BJ (cell line): ENCODE measurements at regions of chr22 and their contacts with region 1.

Region 1: GRCh38 chr22:28051787-28052356 is 132.8 kb upstream of the PITPNB start:
- DNase-seq: no peak
- H3K4me3 ChIP-seq: no peak overlapping the region
- H3K27me3 ChIP-seq: no peaks in the 10 kb centered on the region
- CTCF ChIP-seq: peak; percentile 93

Region 2: DNA sequence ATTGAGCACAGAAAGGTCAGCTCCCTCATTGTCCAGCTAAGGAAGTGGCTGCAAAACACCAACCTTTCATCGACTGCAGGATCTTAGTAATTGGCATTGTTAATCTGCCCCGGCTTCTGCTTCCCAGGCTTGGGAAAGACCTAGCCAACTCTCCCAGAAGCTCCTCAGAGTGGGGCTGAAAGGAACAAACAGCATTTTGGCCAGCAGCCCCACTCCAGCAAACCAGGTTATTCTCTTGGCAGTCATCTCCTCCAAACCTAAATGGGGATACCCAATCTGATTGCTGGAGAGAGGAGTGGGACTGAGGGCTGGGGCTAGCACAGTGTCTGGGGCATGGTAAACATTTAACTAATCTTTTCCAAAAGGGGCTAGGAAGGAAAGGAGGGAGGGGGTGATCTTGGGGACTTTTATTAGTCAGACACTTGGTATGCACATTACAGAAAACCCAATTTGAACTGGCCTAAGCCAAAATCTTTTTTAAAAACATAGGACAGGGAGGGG is 544.7 kb before region 1 on chr22:
- CTCF ChIA-PET with region 1: no interaction called
- POLR2A ChIA-PET with region 1: no interaction called
- DNase-seq: no peak
- H3K4me3 ChIP-seq: no peak overlapping the region
- H3K27me3 ChIP-seq: no peaks in the 10 kb centered on the region
- CTCF ChIP-seq: no peak

Region 3: DNA sequence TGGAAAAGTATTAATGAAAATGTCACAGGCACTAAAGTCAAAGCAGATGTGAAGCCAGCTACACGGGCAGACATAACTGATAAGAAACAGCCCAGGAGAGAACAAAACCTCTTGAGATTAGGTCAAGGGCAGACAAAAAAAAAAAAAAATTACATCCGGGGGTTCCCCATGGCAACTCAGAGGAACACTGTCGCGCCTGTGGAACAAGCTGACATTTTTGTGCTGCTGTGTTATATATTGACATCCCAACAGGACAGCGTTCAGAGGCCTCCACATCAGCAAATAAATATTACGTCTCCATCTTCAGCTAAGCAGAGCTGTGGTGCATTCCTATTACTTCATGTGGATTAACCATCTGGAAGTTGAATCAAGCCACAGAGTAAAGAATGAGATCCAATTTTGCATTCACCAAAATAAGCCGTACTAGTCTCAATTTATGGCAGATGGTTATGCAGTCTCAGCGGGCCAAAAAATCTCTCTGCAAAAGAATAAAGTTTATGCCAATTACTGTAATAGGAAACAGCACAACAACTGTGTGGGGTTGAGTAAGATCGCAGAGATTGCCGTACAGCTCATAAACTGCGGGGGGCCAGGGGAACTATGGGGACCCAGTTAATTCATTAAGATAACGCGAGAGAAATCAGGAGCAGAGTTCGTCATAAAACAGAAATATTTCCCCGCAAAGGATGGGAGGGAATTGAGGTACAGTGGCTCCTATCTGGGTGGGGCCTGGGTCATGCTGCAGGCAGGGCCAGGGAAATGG is 209.0 kb before region 1 on chr22:
- CTCF ChIA-PET with region 1: no interaction called
- POLR2A ChIA-PET with region 1: no interaction called
- DNase-seq: peak; percentile 31
- H3K4me3 ChIP-seq: no peak overlapping the region
- H3K27me3 ChIP-seq: no peaks in the 10 kb centered on the region
- CTCF ChIP-seq: no peak

Region 4: DNA sequence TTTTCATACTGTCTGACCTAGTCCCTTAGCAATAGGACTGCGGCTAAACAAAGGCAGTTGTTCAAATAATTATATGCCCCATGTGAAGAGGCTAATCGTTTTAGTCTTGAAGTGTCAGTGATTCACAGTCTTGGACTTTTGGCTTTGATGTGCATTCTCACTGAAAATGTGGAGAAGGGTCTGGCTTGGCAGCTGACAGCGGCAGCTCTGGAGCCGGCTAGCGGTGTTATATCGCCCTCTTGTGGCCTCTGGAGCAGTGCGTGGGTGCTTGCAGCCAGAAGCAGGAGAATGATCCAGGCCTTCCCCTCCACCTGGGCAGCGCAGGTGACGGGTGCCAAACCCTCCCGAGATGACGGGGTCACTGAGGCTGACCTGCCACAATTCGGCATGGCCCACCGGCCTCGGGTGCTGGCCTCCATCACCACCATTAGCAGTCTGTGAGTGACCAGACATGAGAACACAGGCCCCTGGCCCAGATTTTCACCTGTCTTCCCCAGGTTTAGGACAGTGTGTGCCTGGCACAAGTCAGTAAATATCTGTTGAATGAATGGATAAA is 42.5 kb before region 1 on chr22:
- CTCF ChIA-PET with region 1: no interaction called
- POLR2A ChIA-PET with region 1: no interaction called
- DNase-seq: peak; percentile 35
- H3K4me3 ChIP-seq: no peak overlapping the region
- H3K27me3 ChIP-seq: no peaks in the 10 kb centered on the region
- CTCF ChIP-seq: peak; percentile 96

Region 5: DNA sequence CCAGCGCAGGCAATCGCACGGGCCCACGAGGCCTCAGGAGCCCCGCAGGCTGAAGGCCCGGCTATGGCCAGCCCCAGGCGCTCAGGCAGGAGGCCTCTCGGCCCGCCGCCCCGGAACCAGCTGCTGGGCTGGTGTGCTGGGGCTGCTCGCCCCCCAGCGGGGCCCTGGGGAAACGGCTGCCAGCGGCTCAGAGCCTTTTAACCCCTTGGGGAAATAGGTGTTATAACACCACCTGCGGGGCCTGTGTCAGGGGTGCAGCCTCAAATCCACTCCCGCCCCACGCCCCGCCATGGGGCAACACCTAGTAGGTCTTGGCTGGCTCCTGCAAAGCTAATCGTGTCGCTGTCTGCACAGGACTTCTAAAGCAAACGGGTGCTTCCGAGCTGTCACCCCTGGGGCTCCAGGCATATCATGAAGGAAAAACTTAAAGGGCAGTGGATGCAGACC is 390.4 kb after region 1 on chr22:
- CTCF ChIA-PET with region 1: interaction called, 33 read pairs
- POLR2A ChIA-PET with region 1: no interaction called
- DNase-seq: no peak
- H3K4me3 ChIP-seq: peak overlapping the region; percentile 52
- H3K27me3 ChIP-seq: no peaks in the 10 kb centered on the region; the same call in 1 of the 2 replicates
- CTCF ChIP-seq: peak; percentile 82

Region 6: DNA sequence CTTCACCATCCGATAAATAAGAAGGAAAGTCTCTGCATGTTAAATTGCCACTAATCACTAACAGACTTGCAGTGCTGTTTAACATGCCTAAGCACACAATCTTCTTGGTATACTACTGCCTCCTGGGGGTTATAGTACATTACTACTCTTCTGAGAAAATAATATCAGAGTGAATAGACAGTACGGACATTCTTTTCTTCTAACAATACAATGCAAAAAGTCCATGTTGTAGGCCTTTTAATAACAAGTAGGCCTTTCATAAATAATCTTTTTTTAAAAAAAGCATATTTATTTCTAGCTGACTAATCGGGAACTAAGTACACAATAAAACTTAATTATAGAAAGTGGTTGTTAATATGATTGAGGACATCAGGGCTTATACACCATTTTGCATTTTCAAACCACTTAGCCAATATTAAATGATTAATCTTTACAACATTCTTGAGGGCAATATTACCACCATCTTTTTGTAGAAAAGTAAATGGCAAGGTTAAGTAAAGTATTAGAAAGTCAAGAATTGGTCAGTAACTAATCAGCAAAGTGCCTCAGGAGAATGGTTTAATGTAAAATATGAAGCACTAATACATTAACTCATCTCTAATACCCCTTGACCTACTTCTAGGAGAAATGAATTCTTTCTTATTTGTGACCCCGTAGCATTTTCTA is 543.1 kb after region 1 on chr22:
- CTCF ChIA-PET with region 1: interaction called, 19 read pairs
- POLR2A ChIA-PET with region 1: no interaction called
- DNase-seq: peak; percentile 18
- H3K4me3 ChIP-seq: no peak overlapping the region
- H3K27me3 ChIP-seq: no peaks in the 10 kb centered on the region
- CTCF ChIP-seq: peak; percentile 69

Region 7: DNA sequence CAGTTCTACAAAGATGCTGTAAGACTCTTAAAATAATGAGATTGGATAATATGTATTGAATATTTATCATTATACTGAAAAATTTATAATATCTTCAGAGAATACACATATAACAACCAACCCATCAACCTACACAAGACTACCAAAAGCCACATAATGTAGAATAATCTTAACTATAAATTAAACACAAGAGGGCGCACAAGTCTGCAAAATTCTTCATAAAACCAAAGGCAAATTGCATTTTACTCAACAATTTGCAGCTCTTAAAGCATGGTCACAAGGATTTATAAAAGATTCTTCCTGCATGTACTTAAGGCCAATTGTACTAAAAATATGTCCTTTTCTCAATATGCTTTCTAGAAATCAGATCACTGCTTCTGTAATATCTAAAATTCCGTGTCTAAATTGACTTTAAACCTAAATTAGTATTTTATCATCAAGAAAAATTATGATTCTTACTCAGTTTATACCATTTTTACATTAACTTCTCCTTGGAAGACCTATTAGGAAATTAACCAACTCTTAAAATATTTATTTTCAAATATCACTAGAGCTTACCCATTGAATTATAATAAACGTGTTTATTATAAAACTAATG is 548.8 kb after region 1 on chr22:
- CTCF ChIA-PET with region 1: interaction called, 16 read pairs
- POLR2A ChIA-PET with region 1: no interaction called
- DNase-seq: no peak
- H3K4me3 ChIP-seq: no peak overlapping the region
- H3K27me3 ChIP-seq: no peaks in the 10 kb centered on the region
- CTCF ChIP-seq: peak; percentile 28; the same call in 1 of the 2 replicates